GM12878 (cell line): ENCODE measurements at regions of chr1 and their contacts with region 1.

Region 1: GRCh38 chr1:225766967-225767633 is 10.5 kb upstream of the SRP9 start:
- DNase-seq: no peak
- ATAC-seq: no peak
- H3K4me3 ChIP-seq: no peak overlapping the region
- H3K27ac ChIP-seq: no peak overlapping the region
- H3K4me1 ChIP-seq: peaks cover 9% of the 10 kb centered on the region
- H3K27me3 ChIP-seq: no peaks in the 10 kb centered on the region
- CTCF ChIP-seq: no peak
- EP300 ChIP-seq: no peak
- POLR2A ChIP-seq: no peak
- RAD21 ChIP-seq: no peak

Region 2: GRCh38 chr1:225228841-225229303 is 538.2 kb before region 1 on chr1:
- CTCF ChIA-PET with region 1: no interaction called
- POLR2A ChIA-PET with region 1: no interaction called
- RAD21 ChIA-PET with region 1: no interaction called
- SMC1A ChIA-PET with region 1: no interaction called
- in situ Hi-C with region 1: no loop called
- intact Hi-C with region 1: no loop called
- DNase-seq: no peak
- ATAC-seq: no peak
- H3K4me3 ChIP-seq: no peak overlapping the region
- H3K27ac ChIP-seq: no peak overlapping the region
- H3K4me1 ChIP-seq: no peaks in the 10 kb centered on the region
- H3K27me3 ChIP-seq: no peaks in the 10 kb centered on the region
- CTCF ChIP-seq: no peak
- EP300 ChIP-seq: no peak
- POLR2A ChIP-seq: no peak
- RAD21 ChIP-seq: no peak

Region 3: GRCh38 chr1:225508538-225509375 is 258.3 kb before region 1 on chr1:
- CTCF ChIA-PET with region 1: no interaction called
- POLR2A ChIA-PET with region 1: no interaction called
- RAD21 ChIA-PET with region 1: no interaction called
- SMC1A ChIA-PET with region 1: no interaction called
- in situ Hi-C with region 1: no loop called
- intact Hi-C with region 1: loop called (anchors 5 kb)
- DNase-seq: no peak
- ATAC-seq: no peak
- H3K4me3 ChIP-seq: no peak overlapping the region
- H3K27ac ChIP-seq: no peak overlapping the region
- H3K4me1 ChIP-seq: no peaks in the 10 kb centered on the region
- H3K27me3 ChIP-seq: peaks cover 0 to 3% of the 10 kb centered on the region in 2 experiments; a peak in 1 of 4 replicates
- CTCF ChIP-seq: no peak
- EP300 ChIP-seq: no peak
- POLR2A ChIP-seq: no peak
- RAD21 ChIP-seq: no peak